CD8-positive, alpha-beta T cell (primary cell): ENCODE measurements at regions of chr10 and their contacts with region 1.

Region 1: GRCh38 chr10:6088721-6089390 is at the start of gene RBM17:
- DNase-seq: peak; percentile 96 to 99 (median 97)
- ATAC-seq: peak; percentile 88
- H3K4me3 ChIP-seq: peak within 1 kb of the TSS; percentile 82 to 83
- H3K4me3 Mint-ChIP-seq: peak within 1 kb of the TSS; percentile 96
- H3K27ac ChIP-seq: peak within 1 kb of the TSS; percentile 24 to 54
- H3K27ac Mint-ChIP-seq: peak within 1 kb of the TSS; percentile 86
- H3K4me1 ChIP-seq: peaks cover 47% of the 10 kb centered on the region
- H3K4me1 Mint-ChIP-seq: peaks cover 52% of the 10 kb centered on the region
- H3K27me3 ChIP-seq: no peaks in the 10 kb centered on the region
- H3K27me3 Mint-ChIP-seq: peaks cover 1% of the 10 kb centered on the region
- CTCF ChIP-seq: peak; percentile 100
- total RNA-seq, gene RBM17: 151 to 160 TPM

Region 2: GRCh38 chr10:5889624-5890451 is 199.0 kb before region 1 on chr10 and contains the starts of genes ANKRD16 and FBH1:
- CTCF ChIA-PET with region 1: interaction called, 4 read pairs
- POLR2A ChIA-PET with region 1: no interaction called
- intact Hi-C with region 1: loop called (anchors 1 kb)
- DNase-seq: peak; percentile 93 to 99 (median 97)
- ATAC-seq: peak; percentile 89
- H3K4me3 ChIP-seq: peak within 1 kb of the TSS; percentile 79 to 88
- H3K4me3 Mint-ChIP-seq: peak within 1 kb of the TSS; percentile 90
- H3K27ac ChIP-seq: peak within 1 kb of the TSS; percentile 47 to 63
- H3K27ac Mint-ChIP-seq: peak within 1 kb of the TSS; percentile 81
- H3K4me1 ChIP-seq: peaks cover 19% of the 10 kb centered on the region
- H3K4me1 Mint-ChIP-seq: peaks cover 50% of the 10 kb centered on the region
- H3K27me3 ChIP-seq: no peaks in the 10 kb centered on the region
- H3K27me3 Mint-ChIP-seq: no peaks in the 10 kb centered on the region
- CTCF ChIP-seq: no peak
- total RNA-seq, gene ANKRD16: 1.7 to 2.1 TPM
- total RNA-seq, gene FBH1: 23.5 to 24.8 TPM

Region 3: GRCh38 chr10:6014241-6014761 is 74.6 kb before region 1 on chr10:
- CTCF ChIA-PET with region 1: interaction called, 94 read pairs
- POLR2A ChIA-PET with region 1: interaction called, 5 read pairs
- intact Hi-C with region 1: loop called (anchors 1 kb)
- DNase-seq: peak; percentile 28 to 88 (median 73)
- ATAC-seq: peak; percentile 99
- H3K4me3 ChIP-seq: no peak overlapping the region
- H3K4me3 Mint-ChIP-seq: peak overlapping the region; percentile 17
- H3K27ac ChIP-seq: peak overlapping the region; percentile 23 to 76
- H3K27ac Mint-ChIP-seq: peak overlapping the region; percentile 96
- H3K4me1 ChIP-seq: peaks cover 13% of the 10 kb centered on the region
- H3K4me1 Mint-ChIP-seq: peaks cover 14% of the 10 kb centered on the region
- H3K27me3 ChIP-seq: no peaks in the 10 kb centered on the region
- H3K27me3 Mint-ChIP-seq: no peaks in the 10 kb centered on the region
- CTCF ChIP-seq: peak; percentile 84

Region 4: GRCh38 chr10:6039711-6040110 is 49.1 kb before region 1 on chr10:
- CTCF ChIA-PET with region 1: interaction called, 11 read pairs
- POLR2A ChIA-PET with region 1: interaction called, 4 read pairs
- intact Hi-C with region 1: no loop called
- DNase-seq: peak in 2 of 9 experiments; percentile 6 to 36
- ATAC-seq: no peak
- H3K4me3 ChIP-seq: no peak overlapping the region
- H3K4me3 Mint-ChIP-seq: no peak overlapping the region
- H3K27ac ChIP-seq: no peak overlapping the region
- H3K27ac Mint-ChIP-seq: no peak overlapping the region
- H3K4me1 ChIP-seq: peaks cover 37% of the 10 kb centered on the region
- H3K4me1 Mint-ChIP-seq: peaks cover 45% of the 10 kb centered on the region
- H3K27me3 ChIP-seq: no peaks in the 10 kb centered on the region
- H3K27me3 Mint-ChIP-seq: no peaks in the 10 kb centered on the region
- CTCF ChIP-seq: no peak

Region 5: DNA sequence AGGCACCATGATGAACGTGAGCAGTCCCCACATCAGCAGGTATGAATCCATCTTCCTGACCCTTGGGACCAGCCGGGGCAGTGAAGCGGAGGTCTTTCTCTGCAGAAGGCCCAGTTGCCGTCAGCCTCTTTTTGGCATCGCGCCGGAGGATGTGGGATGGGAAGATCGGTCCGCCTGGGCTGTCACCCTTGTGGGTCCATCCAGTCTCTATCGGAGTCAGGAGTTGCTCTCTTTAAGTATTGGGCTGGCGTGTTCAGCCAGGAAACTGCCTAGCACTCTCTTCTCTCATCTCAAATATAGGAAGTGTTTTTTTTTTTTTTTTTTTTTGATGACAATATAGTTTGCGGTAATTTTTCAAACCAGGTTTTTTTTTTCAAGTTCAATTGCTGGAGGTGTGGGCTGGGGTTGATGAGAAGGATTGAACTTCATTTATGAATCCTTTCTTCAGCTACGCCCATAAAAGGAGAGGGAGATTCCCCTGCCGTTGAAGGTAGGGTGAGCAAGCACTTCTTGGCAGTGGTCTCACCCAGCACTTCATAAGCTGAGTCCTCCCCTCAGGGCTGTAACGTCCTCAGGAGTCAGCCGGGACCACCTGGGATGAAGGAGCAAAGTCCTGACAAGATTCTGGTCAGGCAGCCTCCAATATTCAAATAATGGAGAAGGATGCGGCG is 26.6 kb before region 1 on chr10 and contains the start of gene IL2RA:
- CTCF ChIA-PET with region 1: interaction called, 34 read pairs
- POLR2A ChIA-PET with region 1: interaction called, 3 read pairs
- intact Hi-C with region 1: loop called (anchors 2 kb)
- DNase-seq: peak in 6 of 9 experiments; percentile 49 to 88 (median 60)
- ATAC-seq: peak; percentile 89
- H3K4me3 ChIP-seq: peak within 1 kb of the TSS in 1 of 2 experiments; percentile 24
- H3K4me3 Mint-ChIP-seq: peak within 1 kb of the TSS; percentile 85
- H3K27ac ChIP-seq: no peak within 1 kb of the TSS
- H3K27ac Mint-ChIP-seq: peak within 1 kb of the TSS; percentile 73
- H3K4me1 ChIP-seq: peaks cover 22% of the 10 kb centered on the region
- H3K4me1 Mint-ChIP-seq: peaks cover 56% of the 10 kb centered on the region
- H3K27me3 ChIP-seq: no peaks in the 10 kb centered on the region
- H3K27me3 Mint-ChIP-seq: no peaks in the 10 kb centered on the region
- CTCF ChIP-seq: no peak
- total RNA-seq, gene IL2RA: 1.8 to 2.5 TPM

Region 6: DNA sequence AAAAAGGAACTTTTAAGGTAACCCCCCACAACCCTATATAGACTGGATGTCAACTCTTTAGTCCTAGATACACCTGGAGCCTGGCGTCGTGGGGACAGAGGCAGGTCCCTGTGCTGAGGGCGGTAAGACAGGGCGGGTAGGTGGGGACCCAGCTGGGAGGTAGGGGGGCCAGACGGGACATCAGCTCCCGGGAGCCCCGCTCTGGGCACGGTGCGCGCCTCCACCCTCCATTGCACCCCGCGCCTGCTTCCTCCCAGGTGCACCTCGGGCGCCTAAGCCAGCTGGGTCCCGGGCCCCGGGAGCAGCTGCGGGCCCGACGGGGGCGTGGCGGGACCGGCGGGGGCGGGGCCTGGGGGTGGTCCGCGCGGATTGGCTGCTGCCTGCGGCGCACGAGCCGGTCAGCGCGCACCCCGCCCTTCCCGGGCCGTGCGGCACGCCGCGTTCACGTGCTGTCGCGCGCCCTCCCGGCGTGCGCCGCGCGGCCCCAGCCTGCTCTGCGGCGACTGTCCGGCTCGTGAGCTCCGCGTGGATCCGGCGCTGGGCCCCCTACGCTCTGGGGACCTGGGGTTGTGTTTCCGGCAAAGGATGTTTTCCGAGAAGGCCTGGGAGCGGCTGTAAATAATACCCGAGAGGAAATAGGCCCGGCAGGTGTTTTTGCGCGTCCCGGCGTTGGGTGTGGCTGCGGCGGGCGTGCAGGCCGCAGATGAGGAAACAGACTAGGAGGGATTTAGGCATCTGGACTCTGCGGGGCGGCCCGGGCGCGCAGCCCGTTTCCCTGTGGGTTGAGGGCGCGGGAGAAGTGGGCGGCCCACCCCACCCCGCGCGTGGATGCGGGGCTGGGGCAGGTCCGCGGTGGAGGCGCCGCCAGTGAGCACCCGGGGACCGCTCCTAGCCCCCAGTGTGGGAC is 74.8 kb after region 1 on chr10:
- CTCF ChIA-PET with region 1: interaction called, 4 read pairs
- POLR2A ChIA-PET with region 1: interaction called, 3 read pairs
- intact Hi-C with region 1: loop called (anchors 2 to 5 kb)
- DNase-seq: peak; percentile 80 to 97 (median 92)
- ATAC-seq: peak; percentile 91
- H3K4me3 ChIP-seq: peak overlapping the region; percentile 76 to 81
- H3K4me3 Mint-ChIP-seq: peak overlapping the region; percentile 92
- H3K27ac ChIP-seq: peak overlapping the region; percentile 86 to 90
- H3K27ac Mint-ChIP-seq: peak overlapping the region; percentile 98
- H3K4me1 ChIP-seq: peaks cover 31% of the 10 kb centered on the region
- H3K4me1 Mint-ChIP-seq: peaks cover 54% of the 10 kb centered on the region
- H3K27me3 ChIP-seq: no peaks in the 10 kb centered on the region
- H3K27me3 Mint-ChIP-seq: no peaks in the 10 kb centered on the region
- CTCF ChIP-seq: no peak

Region 7: DNA sequence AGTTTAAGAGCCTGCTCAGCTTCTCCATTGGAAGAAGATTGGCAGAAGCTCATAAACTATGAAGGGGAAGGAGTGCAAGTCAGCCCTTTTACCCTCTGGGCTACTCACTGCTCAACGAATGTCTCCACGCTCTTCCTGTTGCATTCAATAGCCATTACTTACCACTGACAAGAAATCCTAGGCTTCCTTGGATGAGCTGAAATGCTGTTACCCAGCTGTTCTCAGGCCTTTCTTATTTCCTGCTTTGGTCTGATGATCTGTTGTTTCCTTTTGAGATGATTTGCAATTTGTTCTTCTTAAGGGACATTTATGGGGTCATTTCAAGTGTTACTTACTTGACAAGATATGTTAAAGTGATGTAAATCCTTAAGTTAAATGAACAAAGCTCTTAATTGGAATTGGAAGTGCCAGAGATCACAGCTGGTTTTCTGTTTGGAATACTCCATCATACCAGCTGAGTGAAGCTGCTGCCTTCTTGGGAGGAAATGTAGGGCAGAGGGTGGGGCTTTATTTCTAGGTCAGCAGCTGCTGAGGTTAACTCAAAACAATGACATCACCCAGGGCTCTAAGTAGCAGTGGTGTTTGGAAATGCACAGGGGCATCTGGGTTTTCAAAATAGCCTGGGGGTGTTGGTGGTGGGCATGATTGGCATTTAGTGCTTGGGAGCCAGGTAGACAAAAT is 321.3 kb after region 1 on chr10:
- CTCF ChIA-PET with region 1: interaction called, 14 read pairs
- POLR2A ChIA-PET with region 1: interaction called, 4 read pairs
- intact Hi-C with region 1: no loop called
- DNase-seq: peak in 8 of 9 experiments; percentile 15 to 87 (median 56)
- ATAC-seq: peak; percentile 93
- H3K4me3 ChIP-seq: peak overlapping the region in 1 of 2 experiments; percentile 18
- H3K4me3 Mint-ChIP-seq: peak overlapping the region; percentile 43
- H3K27ac ChIP-seq: peak overlapping the region; percentile 42 to 89
- H3K27ac Mint-ChIP-seq: peak overlapping the region; percentile 95
- H3K4me1 ChIP-seq: peaks cover 17% of the 10 kb centered on the region
- H3K4me1 Mint-ChIP-seq: peaks cover 38% of the 10 kb centered on the region
- H3K27me3 ChIP-seq: no peaks in the 10 kb centered on the region
- H3K27me3 Mint-ChIP-seq: no peaks in the 10 kb centered on the region
- CTCF ChIP-seq: no peak